ENCODE measurements at regions of chr5 and their contacts with region 1.

Region 1: GRCh38 chr5:141691867-141692532 is 10.0 kb upstream of the ARAP3 start:
- DNase-seq: peak; percentile 70 to 95 (median 86)
- ATAC-seq: peak; percentile 74
- H3K4me3 ChIP-seq: peak overlapping the region; percentile 16 to 34
- H3K4me3 Mint-ChIP-seq: peak overlapping the region; percentile 67
- H3K27ac ChIP-seq: no peak overlapping the region
- H3K27ac Mint-ChIP-seq: no peak overlapping the region
- H3K4me1 ChIP-seq: peaks cover 18% of the 10 kb centered on the region
- H3K4me1 Mint-ChIP-seq: peaks cover 17% of the 10 kb centered on the region
- H3K27me3 ChIP-seq: no peaks in the 10 kb centered on the region
- H3K27me3 Mint-ChIP-seq: peaks cover 11% of the 10 kb centered on the region
- CTCF ChIP-seq: peak; percentile 97

Region 2: GRCh38 chr5:141664732-141665461 is 27.1 kb before region 1 on chr5:
- CTCF ChIA-PET with region 1: interaction called, 38 read pairs
- POLR2A ChIA-PET with region 1: no interaction called
- intact Hi-C with region 1: loop called in 1 of 2 experiments (anchors 1 kb)
- DNase-seq: peak; percentile 49 to 88 (median 76)
- ATAC-seq: peak; percentile 83
- H3K4me3 ChIP-seq: no peak overlapping the region
- H3K4me3 Mint-ChIP-seq: no peak overlapping the region
- H3K27ac ChIP-seq: no peak overlapping the region
- H3K27ac Mint-ChIP-seq: no peak overlapping the region
- H3K4me1 ChIP-seq: no peaks in the 10 kb centered on the region
- H3K4me1 Mint-ChIP-seq: peaks cover 3% of the 10 kb centered on the region
- H3K27me3 ChIP-seq: no peaks in the 10 kb centered on the region
- H3K27me3 Mint-ChIP-seq: no peaks in the 10 kb centered on the region
- CTCF ChIP-seq: peak; percentile 83

Region 3: GRCh38 chr5:141811287-141812155 is 119.5 kb after region 1 on chr5:
- CTCF ChIA-PET with region 1: interaction called, 11 read pairs
- POLR2A ChIA-PET with region 1: no interaction called
- intact Hi-C with region 1: loop called (anchors 1 to 5 kb)
- DNase-seq: peak in 7 of 9 experiments; percentile 2 to 61 (median 39)
- ATAC-seq: peak; percentile 83
- H3K4me3 ChIP-seq: no peak overlapping the region
- H3K4me3 Mint-ChIP-seq: no peak overlapping the region
- H3K27ac ChIP-seq: no peak overlapping the region
- H3K27ac Mint-ChIP-seq: no peak overlapping the region
- H3K4me1 ChIP-seq: no peaks in the 10 kb centered on the region
- H3K4me1 Mint-ChIP-seq: peaks cover 2% of the 10 kb centered on the region
- H3K27me3 ChIP-seq: peaks cover 5 to 11% of the 10 kb centered on the region in 2 experiments
- H3K27me3 Mint-ChIP-seq: peaks cover 47% of the 10 kb centered on the region
- CTCF ChIP-seq: peak; percentile 76

Region 4: DNA sequence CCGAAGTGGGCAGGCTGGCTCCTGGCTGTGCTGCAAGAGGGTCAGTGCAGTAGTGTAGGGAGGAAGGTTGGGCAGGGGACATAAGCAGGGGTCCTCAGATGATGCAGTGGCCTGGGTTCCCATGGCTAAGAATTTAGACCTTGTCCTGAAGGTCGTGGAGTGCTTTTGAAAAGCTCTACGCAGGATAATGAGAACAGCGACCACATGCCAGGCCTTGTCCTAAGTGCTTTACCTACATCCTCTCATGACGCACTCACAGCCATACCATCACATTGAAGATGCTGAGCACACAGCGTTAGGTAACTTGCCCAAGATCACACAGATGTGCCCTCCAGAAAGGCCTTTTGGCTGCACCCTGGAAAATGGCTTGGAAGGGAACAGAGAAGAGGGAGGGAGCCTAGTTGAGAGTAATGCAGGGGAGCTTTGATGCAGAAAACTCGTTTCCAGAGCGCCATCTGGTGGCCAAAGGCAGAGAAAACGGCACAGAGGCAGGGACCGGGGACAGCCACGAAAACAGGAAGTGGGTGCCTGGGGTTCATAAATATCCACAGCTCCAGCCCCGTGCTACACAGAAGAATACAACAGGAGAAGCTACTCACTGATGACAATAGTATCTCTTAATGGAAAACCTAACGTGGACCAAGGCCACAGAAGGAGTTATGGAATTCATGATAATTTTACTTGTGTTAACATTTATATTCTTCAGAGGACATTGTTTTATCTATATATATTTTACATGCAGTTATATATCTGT is 268.6 kb after region 1 on chr5:
- CTCF ChIA-PET with region 1: interaction called, 244 read pairs
- POLR2A ChIA-PET with region 1: interaction called, 26 read pairs
- intact Hi-C with region 1: loop called (anchors 1 kb)
- DNase-seq: peak; percentile 81 to 97 (median 91)
- ATAC-seq: peak; percentile 99
- H3K4me3 ChIP-seq: no peak overlapping the region
- H3K4me3 Mint-ChIP-seq: peak overlapping the region; percentile 59
- H3K27ac ChIP-seq: peak overlapping the region in 1 of 2 experiments; percentile 66
- H3K27ac Mint-ChIP-seq: peak overlapping the region; percentile 95
- H3K4me1 ChIP-seq: peaks cover 42% of the 10 kb centered on the region
- H3K4me1 Mint-ChIP-seq: peaks cover 43% of the 10 kb centered on the region
- H3K27me3 ChIP-seq: no peaks in the 10 kb centered on the region
- H3K27me3 Mint-ChIP-seq: no peaks in the 10 kb centered on the region
- CTCF ChIP-seq: peak; percentile 83

Region 5: DNA sequence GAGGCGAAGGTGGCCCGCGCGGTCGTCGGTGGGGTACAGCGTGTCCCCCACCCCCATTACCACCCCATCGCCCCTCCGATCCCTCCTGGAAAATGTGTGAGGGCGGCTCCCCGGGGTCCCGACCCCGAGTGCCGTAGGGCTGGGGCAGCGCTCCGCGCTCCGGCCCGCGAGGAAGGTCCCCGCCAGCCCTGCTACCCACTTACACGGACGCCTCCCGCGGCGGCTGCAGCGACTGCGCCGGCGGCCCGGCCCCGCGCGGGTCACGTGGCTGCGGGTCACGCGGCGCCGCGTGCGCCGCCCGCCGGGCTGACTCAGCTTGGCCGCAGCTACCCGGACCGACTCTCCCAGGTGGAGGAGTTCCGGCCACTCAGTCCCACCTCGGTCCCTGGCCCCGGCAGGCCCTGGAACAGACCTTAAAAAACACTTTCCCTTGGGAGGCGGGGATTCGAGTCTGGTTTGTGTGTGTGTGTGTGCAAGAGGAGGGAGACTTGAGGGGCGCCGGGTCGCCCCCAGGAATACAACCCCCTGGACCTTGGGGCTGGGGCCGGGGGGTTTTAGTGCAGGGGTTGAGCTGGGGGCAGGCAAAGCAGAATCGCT is 320.9 kb after region 1 on chr5 and contains the start of gene GNPDA1:
- CTCF ChIA-PET with region 1: interaction called, 10 read pairs
- POLR2A ChIA-PET with region 1: interaction called, 3 read pairs
- intact Hi-C with region 1: no loop called
- DNase-seq: peak; percentile 29 to 85 (median 61)
- ATAC-seq: peak; percentile 52
- H3K4me3 ChIP-seq: peak within 1 kb of the TSS; percentile 60 to 78
- H3K4me3 Mint-ChIP-seq: peak within 1 kb of the TSS; percentile 83
- H3K27ac ChIP-seq: peak within 1 kb of the TSS; percentile 55 to 72
- H3K27ac Mint-ChIP-seq: peak within 1 kb of the TSS; percentile 90
- H3K4me1 ChIP-seq: peaks cover 59% of the 10 kb centered on the region
- H3K4me1 Mint-ChIP-seq: peaks cover 72% of the 10 kb centered on the region
- H3K27me3 ChIP-seq: no peaks in the 10 kb centered on the region
- H3K27me3 Mint-ChIP-seq: no peaks in the 10 kb centered on the region
- CTCF ChIP-seq: no peak
- total RNA-seq, gene GNPDA1: 5.2 TPM

Region 6: DNA sequence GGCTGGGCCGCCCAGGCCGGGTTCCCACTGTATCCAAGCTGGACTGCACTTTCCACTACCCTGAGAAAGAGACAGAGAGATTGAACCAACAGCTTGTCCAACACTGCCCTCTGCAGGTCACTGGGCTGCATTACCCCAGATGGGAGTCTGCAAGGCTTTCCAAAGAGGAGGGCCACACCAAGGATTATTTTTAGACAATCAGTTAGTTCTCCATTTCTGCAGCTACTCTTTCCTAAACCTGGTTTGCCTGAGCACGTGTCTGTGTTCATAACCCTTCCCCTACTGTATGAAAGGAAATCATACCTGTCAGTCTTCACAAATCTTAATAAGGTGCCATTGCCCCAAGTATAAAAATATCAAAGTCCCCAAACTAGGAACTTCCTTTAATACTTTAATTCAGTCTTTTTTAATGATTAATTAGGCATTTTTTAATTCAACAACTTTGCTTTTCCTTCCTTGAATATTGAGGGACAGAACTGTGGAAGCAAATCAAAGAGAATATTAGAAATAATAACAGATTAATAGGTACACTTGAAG is 1007.3 kb after region 1 on chr5:
- CTCF ChIA-PET with region 1: interaction called, 8 read pairs
- POLR2A ChIA-PET with region 1: no interaction called
- intact Hi-C with region 1: loop called in 1 of 2 experiments (anchors 10 kb)
- DNase-seq: peak; percentile 53 to 83 (median 74)
- ATAC-seq: peak; percentile 91
- H3K4me3 ChIP-seq: no peak overlapping the region
- H3K4me3 Mint-ChIP-seq: no peak overlapping the region
- H3K27ac ChIP-seq: no peak overlapping the region
- H3K27ac Mint-ChIP-seq: no peak overlapping the region
- H3K4me1 ChIP-seq: no peaks in the 10 kb centered on the region
- H3K4me1 Mint-ChIP-seq: no peaks in the 10 kb centered on the region
- H3K27me3 ChIP-seq: no peaks in the 10 kb centered on the region
- H3K27me3 Mint-ChIP-seq: no peaks in the 10 kb centered on the region
- CTCF ChIP-seq: peak; percentile 84